Heart left ventricle (tissue), 16 donors: ENCODE measurements at regions of chr10 and their contacts with region 1.

Region 1: DNA sequence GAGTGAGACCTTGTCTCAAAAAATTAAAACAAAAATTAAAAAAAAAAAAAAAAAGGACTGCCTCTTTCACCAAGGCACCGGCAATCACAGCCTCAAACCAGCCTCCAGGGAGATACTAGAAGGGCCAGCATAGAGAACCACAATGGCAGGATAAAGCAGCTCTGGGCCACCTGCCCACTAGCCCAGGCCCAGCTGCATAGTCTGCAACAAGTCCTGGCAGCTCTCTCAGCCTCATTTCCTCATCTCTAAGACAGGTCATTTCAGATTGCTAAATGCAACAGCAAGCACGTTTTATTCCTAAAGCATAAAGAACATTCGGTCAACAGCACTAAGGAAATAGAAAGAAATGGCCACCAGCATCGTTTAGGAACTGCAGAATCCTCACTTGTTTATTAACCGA is 28.8 kb downstream of the XPNPEP1 start:
- DNase-seq: peak; percentile 78 to 90 (median 84)
- ATAC-seq: peak; percentile 68 to 78 (median 76)
- H3K4me3 ChIP-seq: peak overlapping the region in 2 of 12 donors; percentile 1 to 9
- H3K27ac ChIP-seq: peak overlapping the region; percentile 47 to 85 (median 78)
- H3K4me1 ChIP-seq: peaks cover 22 to 96% (median 82%) of the 10 kb centered on the region in 12 donors
- H3K27me3 ChIP-seq: no peaks in the 10 kb centered on the region
- CTCF ChIP-seq: no peak
- POLR2A ChIP-seq: no peak

Region 2: DNA sequence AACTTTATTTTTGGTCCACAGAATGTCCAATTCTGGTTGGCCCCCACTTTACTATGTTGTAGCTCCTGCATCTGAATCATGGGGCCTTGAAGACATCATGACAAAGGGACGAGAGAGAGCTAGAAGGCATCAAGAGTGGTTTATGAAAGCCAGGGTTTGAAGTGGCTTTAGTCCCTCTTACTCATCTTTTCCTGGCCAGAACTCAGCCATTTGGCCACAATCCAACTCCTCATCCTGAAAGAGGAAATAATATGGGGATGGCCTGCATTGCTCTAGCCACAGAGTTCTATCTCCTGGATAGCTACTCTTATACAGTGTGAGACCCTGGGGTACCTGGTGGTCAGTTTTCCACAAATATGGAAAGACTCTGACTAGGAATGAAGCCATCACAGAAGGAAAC is 390.1 kb before region 1 on chr10:
- intact Hi-C with region 1: no loop called
- DNase-seq: no peak
- ATAC-seq: no peak
- H3K4me3 ChIP-seq: no peak overlapping the region
- H3K27ac ChIP-seq: no peak overlapping the region
- H3K4me1 ChIP-seq: no peaks in the 10 kb centered on the region
- H3K27me3 ChIP-seq: no peaks in the 10 kb centered on the region
- CTCF ChIP-seq: no peak
- POLR2A ChIP-seq: no peak

Region 3: DNA sequence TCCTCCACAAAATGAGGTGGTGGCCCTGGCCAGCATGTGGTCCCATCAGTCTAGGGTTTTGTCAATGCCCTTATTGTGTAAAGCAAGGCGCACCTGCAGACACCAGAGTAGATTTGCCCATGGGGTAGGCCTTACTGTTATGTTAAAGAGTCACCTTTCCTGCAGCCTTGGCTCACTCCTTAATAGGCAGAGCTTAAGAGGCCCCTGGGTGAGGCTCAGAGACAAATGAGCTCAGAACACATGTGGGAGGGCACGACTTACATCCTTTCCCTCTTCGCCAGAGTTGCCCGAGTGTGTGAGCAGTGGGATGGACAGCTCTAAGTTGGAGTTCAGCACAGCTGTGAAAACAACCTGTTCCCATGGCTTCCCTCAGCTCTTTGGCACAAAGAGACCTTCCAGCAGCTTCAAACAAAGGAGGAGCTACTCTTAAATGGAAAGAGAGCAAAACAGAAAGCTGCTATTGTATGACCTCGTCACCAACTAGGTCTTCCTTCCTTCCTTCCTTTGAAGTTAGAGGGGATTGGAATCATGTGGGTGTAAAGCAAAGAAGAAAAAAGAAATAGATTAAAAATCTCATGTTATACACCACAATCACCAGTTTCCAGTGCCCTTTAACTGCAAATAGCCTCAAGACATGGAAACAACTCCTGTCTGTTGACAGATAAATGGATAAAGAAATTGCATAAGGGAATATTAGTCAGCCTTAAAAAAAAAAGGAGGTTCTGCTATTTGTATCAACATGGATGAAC is 40.6 kb after region 1 on chr10:
- intact Hi-C with region 1: loop called in 1 of 10 experiments (anchors 5 kb)
- DNase-seq: peak in 4 of 5 donors; percentile 41 to 54 (median 45)
- ATAC-seq: peak; percentile 69 to 93 (median 91)
- H3K4me3 ChIP-seq: no peak overlapping the region
- H3K27ac ChIP-seq: peak overlapping the region in 11 of 12 donors; percentile 25 to 62 (median 39)
- H3K4me1 ChIP-seq: peaks cover 0 to 33% (median 17%) of the 10 kb centered on the region in 12 donors
- H3K27me3 ChIP-seq: no peaks in the 10 kb centered on the region
- CTCF ChIP-seq: no peak
- POLR2A ChIP-seq: no peak

Region 4: DNA sequence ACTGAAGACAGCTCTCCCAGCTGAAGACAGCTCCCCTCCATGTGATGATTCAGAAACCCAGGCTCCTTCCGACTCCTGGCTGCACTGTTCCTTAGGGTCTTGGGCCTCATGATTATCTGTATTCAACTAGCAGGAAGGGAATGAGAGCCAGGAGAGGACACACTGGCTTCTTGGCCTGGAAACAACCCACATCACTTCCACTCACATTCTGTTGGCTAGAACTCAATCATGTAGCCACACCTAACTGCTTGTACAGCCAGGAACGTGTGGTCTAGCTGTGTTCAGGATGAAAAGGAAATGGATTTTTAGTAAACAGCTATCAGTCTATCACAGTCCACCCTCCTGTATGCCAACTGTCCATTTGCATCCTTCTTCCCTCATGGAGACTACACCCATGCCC is 59.2 kb after region 1 on chr10:
- intact Hi-C with region 1: no loop called
- DNase-seq: no peak
- ATAC-seq: peak in 3 of 4 donors; percentile 41 to 62 (median 48)
- H3K4me3 ChIP-seq: no peak overlapping the region
- H3K27ac ChIP-seq: no peak overlapping the region
- H3K4me1 ChIP-seq: peaks cover 0 to 7% (median 0%) of the 10 kb centered on the region in 12 donors
- H3K27me3 ChIP-seq: no peaks in the 10 kb centered on the region
- CTCF ChIP-seq: no peak
- POLR2A ChIP-seq: no peak

Region 5: GRCh38 chr10:109978481-109978880 is 84.0 kb after region 1 on chr10:
- intact Hi-C with region 1: loop called in 4 of 10 experiments (anchors 5 to 10 kb)
- DNase-seq: peak in 3 of 5 donors; percentile 34 to 40 (median 40)
- ATAC-seq: peak in 3 of 4 donors; percentile 29 to 65 (median 57)
- H3K4me3 ChIP-seq: peak overlapping the region in 1 of 12 donors; percentile 3
- H3K27ac ChIP-seq: peak overlapping the region in 9 of 12 donors; percentile 2 to 45 (median 28)
- H3K4me1 ChIP-seq: peaks cover 0 to 50% (median 21%) of the 10 kb centered on the region in 12 donors
- H3K27me3 ChIP-seq: no peaks in the 10 kb centered on the region
- CTCF ChIP-seq: peak; percentile 62 to 87 (median 79)
- POLR2A ChIP-seq: no peak

Region 6: DNA sequence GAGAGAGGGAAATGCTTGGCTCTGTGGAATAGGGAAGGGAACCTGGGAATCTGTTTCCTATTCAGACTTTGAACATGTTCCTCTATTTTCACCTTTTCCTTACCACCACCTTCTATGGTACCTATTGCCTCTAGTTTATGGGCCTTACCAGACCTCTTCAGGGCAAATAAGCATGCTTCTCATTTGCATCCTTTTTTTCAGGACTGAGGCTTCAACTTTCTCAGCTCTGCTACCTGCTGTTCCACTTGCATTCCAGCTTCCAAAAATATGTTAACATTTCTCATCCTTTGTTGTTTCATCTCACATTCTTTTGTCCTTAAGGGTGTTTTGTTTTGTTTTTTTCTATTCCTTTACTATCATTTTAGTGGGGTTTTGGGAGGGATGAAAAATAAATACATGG is 235.0 kb after region 1 on chr10:
- intact Hi-C with region 1: loop called in 4 of 10 experiments (anchors 5 to 10 kb)
- DNase-seq: no peak
- ATAC-seq: no peak
- H3K4me3 ChIP-seq: no peak overlapping the region
- H3K27ac ChIP-seq: no peak overlapping the region
- H3K4me1 ChIP-seq: peaks cover 0 to 5% (median 0%) of the 10 kb centered on the region in 12 donors
- H3K27me3 ChIP-seq: no peaks in the 10 kb centered on the region
- CTCF ChIP-seq: no peak
- POLR2A ChIP-seq: no peak

Region 7: DNA sequence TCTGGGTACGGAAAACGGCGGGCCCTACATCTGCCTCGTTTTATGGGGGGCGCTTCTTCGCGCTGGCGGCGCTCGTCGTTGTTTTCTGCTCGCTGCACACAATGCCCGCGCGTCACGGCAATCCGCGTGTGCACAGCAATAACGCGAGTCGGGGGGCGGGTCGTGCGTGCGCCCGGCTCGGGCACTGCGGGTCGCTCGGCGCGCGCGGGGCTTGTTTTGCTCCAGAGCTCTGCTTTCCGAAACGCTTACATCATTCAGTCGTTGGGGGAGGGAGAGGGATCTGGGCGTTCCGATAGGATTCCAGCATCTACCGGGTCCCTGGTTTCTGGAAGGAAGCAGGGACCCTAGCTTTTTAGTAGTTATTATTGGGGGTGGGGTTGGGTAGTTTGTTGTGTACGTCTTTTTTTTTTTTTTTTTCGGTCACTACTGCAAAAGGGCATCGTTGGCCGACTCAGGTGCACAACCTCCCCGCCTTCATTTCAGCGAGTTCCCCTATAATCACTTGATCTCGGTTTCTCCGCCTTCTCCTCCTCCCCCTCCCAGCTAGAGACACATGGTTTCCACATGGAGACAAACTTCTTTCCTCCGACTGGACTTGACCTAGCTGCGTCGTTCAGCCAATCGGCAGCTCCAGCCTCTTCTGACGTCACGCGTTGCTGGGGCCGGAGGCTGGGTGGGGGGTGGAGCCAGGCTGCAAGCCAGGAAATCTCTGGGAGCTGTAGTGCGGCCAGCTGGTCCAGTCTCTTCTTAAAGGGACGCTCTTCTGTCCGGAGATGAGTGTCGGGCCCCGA is 316.4 kb after region 1 on chr10:
- intact Hi-C with region 1: loop called in 2 of 10 experiments (anchors 5 to 10 kb)
- DNase-seq: peak; percentile 97 to 98 (median 97)
- ATAC-seq: peak; percentile 90 to 92 (median 91)
- H3K4me3 ChIP-seq: peak overlapping the region; percentile 61 to 92 (median 83)
- H3K27ac ChIP-seq: peak overlapping the region; percentile 94 to 99 (median 98)
- H3K4me1 ChIP-seq: peaks cover 11 to 51% (median 34%) of the 10 kb centered on the region in 12 donors
- H3K27me3 ChIP-seq: no peaks in the 10 kb centered on the region
- CTCF ChIP-seq: no peak
- POLR2A ChIP-seq: peak in 1 of 2 donors; percentile 76

Region 8: DNA sequence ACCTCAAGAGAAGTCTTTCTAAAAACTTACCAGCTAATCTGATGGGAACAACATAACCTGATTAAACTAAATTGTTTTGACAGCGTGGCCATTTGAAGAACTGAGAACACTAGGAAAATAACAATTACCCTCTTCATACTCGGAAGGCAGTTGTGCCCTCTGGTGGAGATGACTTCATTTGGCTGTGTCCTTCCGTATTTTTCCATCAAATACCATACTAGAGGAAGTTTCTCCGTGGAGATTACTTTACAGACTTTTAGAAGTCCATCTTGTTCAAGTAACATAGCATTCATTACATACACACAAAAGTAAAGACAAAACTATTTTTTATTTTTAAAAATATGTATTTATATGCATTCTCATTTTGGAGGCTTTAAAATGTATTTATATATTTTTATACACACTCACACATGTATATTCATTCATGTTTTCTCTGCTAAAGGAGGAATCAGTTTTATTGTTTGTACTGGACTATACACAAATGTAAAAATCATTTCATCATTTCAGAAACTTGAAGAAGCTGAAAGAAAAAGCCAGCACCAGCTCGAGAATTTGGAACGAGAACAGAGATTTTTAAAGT is 385.0 kb after region 1 on chr10:
- intact Hi-C with region 1: loop called in 7 of 10 experiments (anchors 5 to 10 kb)
- DNase-seq: peak in 4 of 5 donors; percentile 34 to 57 (median 50)
- ATAC-seq: peak; percentile 39 to 75 (median 69)
- H3K4me3 ChIP-seq: peak overlapping the region in 1 of 12 donors; percentile 27
- H3K27ac ChIP-seq: peak overlapping the region in 8 of 12 donors; percentile 2 to 46 (median 26)
- H3K4me1 ChIP-seq: peaks cover 0 to 64% (median 35%) of the 10 kb centered on the region in 12 donors
- H3K27me3 ChIP-seq: no peaks in the 10 kb centered on the region
- CTCF ChIP-seq: peak; percentile 62 to 90 (median 81)
- POLR2A ChIP-seq: no peak